Spleen (tissue), 13 donors: ENCODE measurements at regions of chr18 and their contacts with region 1.

Region 1: DNA sequence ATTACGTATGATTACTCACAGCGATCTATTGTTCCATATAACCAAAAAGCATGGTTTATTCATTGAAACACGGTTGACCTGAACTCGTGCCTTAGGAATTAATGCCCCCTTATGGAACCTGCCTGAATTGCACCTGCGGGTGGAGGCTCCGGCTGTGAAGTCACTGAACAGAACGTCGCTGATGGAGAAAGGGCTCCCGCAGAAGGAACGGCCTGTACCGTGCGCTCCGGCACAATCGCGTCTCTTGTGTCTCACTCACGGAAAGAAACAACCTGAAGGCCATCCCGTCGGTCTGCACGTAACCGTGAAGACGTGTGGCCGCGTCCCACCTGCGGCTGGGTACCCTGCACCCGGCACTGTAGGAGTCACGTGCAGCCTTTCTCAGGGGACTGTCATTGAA is 133.1 kb downstream of the NFATC1 start:
- DNase-seq: peak; percentile 82
- H3K4me3 ChIP-seq: no peak overlapping the region
- H3K27ac ChIP-seq: no peak overlapping the region
- H3K4me1 ChIP-seq: peaks cover 0 to 45% (median 23%) of the 10 kb centered on the region in 6 donors
- H3K27me3 ChIP-seq: no peaks in the 10 kb centered on the region
- CTCF ChIP-seq: peak; percentile 81 to 94 (median 92)
- POLR2A ChIP-seq: no peak

Region 2: GRCh38 chr18:79380816-79381806 is 147.7 kb before region 1 on chr18:
- intact Hi-C with region 1: loop called (anchors 5 kb)
- DNase-seq: peak; percentile 89
- H3K4me3 ChIP-seq: no peak overlapping the region
- H3K27ac ChIP-seq: no peak overlapping the region
- H3K4me1 ChIP-seq: peaks cover 6 to 29% (median 11%) of the 10 kb centered on the region in 6 donors
- H3K27me3 ChIP-seq: peaks cover 0 to 5% (median 0%) of the 10 kb centered on the region in 7 donors
- CTCF ChIP-seq: peak; percentile 74 to 93 (median 82)
- POLR2A ChIP-seq: no peak

Region 3: DNA sequence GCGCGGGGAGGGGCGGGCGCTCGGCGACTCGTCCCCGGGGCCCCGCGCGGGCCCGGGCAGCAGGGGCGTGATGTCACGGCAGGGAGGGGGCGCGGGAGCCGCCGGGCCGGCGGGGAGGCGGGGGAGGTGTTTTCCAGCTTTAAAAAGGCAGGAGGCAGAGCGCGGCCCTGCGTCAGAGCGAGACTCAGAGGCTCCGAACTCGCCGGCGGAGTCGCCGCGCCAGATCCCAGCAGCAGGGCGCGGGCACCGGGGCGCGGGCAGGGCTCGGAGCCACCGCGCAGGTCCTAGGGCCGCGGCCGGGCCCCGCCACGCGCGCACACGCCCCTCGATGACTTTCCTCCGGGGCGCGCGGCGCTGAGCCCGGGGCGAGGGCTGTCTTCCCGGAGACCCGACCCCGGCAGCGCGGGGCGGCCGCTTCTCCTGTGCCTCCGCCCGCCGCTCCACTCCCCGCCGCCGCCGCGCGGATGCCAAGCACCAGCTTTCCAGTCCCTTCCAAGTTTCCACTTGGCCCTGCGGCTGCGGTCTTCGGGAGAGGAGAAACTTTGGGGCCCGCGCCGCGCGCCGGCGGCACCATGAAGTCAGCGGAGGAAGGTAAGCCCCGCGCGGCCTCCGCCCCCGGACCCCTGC is 133.0 kb before region 1 on chr18 and contains the start of gene NFATC1:
- intact Hi-C with region 1: loop called (anchors 5 kb)
- DNase-seq: peak; percentile 86
- H3K4me3 ChIP-seq: peak within 1 kb of the TSS; percentile 31 to 74 (median 62)
- H3K27ac ChIP-seq: peak within 1 kb of the TSS; percentile 48 to 97 (median 84)
- H3K4me1 ChIP-seq: peaks cover 25 to 75% (median 66%) of the 10 kb centered on the region in 6 donors
- H3K27me3 ChIP-seq: peaks cover 0 to 65% (median 12%) of the 10 kb centered on the region in 7 donors
- CTCF ChIP-seq: peak in 1 of 11 experiments; percentile 2
- POLR2A ChIP-seq: no peak
- total RNA-seq, gene NFATC1: 38.6 to 64.9 (median 56.1) TPM

Region 4: DNA sequence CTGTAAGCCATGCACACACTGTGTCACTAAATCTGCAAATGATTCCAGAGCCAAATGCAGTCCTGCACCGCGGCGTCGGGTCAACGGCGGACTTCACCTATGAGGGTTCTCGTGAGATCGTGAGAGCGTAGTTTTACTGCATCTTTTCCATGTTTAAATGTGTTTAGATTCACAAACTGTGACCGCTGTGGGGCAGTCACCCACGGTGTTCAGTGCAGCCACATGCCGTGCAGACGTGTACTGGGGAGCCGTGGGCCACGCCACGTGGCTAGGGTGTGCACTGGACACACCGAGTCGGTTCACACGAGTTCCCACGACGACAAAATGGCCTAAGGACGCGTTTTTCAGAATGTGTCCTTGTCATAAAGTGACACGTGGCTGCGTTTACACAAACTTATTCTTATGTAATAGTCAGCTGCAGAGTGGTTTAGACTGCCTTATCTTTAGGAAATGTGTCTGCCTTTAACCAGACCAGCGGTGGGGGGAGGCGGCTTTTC is 99.0 kb before region 1 on chr18:
- intact Hi-C with region 1: no loop called
- DNase-seq: no peak
- H3K4me3 ChIP-seq: no peak overlapping the region
- H3K27ac ChIP-seq: no peak overlapping the region
- H3K4me1 ChIP-seq: peaks cover 0 to 61% (median 16%) of the 10 kb centered on the region in 6 donors
- H3K27me3 ChIP-seq: no peaks in the 10 kb centered on the region
- CTCF ChIP-seq: no peak
- POLR2A ChIP-seq: no peak

Region 5: DNA sequence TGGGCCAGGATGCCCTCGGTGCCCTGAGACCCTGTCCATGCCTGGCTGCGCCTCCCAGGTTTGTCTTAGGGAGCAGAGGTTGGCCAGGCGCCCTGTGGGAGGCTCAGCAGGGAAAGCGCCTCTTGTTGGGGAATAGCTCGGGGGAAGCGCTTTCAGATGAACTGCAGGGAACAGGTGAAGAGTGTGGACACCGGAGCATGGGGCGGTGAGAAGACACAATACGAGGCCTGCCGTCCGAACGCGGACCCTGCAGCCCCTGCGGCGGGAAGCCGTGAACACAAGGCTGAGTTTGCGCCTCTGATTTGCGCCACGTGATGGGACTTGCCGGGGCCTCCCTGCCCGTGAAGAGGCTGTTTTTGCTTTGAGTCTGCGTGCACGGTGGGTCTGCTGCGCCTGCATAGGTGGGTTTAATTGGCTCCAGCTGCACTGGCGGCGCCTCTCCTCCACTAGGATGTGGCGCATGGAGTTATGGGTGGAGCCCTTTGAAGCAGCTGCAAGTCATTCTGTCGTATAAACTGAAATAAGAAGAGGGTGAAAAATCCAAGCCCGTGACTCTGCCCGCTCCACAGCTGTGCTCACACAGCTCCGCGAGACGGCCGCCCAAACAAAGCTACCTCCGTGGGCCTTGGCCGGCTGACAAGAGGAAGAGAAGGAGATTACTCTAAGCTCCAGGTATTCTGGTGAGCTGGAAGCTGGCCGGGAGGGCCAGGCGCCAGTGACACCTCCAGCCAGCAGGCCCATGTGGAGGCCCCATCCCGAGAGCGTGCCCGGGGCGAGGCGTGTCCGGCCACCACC is 47.2 kb after region 1 on chr18:
- intact Hi-C with region 1: no loop called
- DNase-seq: peak; percentile 62
- H3K4me3 ChIP-seq: no peak overlapping the region
- H3K27ac ChIP-seq: peak overlapping the region in 1 of 8 donors; percentile 45
- H3K4me1 ChIP-seq: peaks cover 3 to 43% (median 27%) of the 10 kb centered on the region in 6 donors
- H3K27me3 ChIP-seq: peaks cover 0 to 5% (median 0%) of the 10 kb centered on the region in 7 donors
- CTCF ChIP-seq: no peak
- POLR2A ChIP-seq: no peak

Region 6: GRCh38 chr18:79644006-79644665 is 115.3 kb after region 1 on chr18:
- intact Hi-C with region 1: loop called (anchors 5 kb)
- DNase-seq: peak; percentile 91
- H3K4me3 ChIP-seq: peak overlapping the region in 1 of 8 donors; percentile 24
- H3K27ac ChIP-seq: no peak overlapping the region
- H3K4me1 ChIP-seq: peaks cover 12 to 26% (median 20%) of the 10 kb centered on the region in 6 donors
- H3K27me3 ChIP-seq: peaks cover 0 to 13% (median 0%) of the 10 kb centered on the region in 7 donors
- CTCF ChIP-seq: peak; percentile 75 to 96 (median 92)
- POLR2A ChIP-seq: no peak

Region 7: GRCh38 chr18:79898916-79899608 is 370.2 kb after region 1 on chr18:
- intact Hi-C with region 1: no loop called
- DNase-seq: peak; percentile 64
- H3K4me3 ChIP-seq: no peak overlapping the region
- H3K27ac ChIP-seq: no peak overlapping the region
- H3K4me1 ChIP-seq: no peaks in the 10 kb centered on the region
- H3K27me3 ChIP-seq: no peaks in the 10 kb centered on the region
- CTCF ChIP-seq: no peak
- POLR2A ChIP-seq: no peak